ENCODE measurements at regions of chr18 and their contacts with region 1.

Region 1: GRCh38 chr18:56083097-56083521 is 495.1 kb upstream of the TCF4 start:
- DNase-seq: peak; percentile 67
- ATAC-seq: peak; percentile 58

Region 2: GRCh38 chr18:56052202-56052601 is 30.9 kb before region 1 on chr18:
- intact Hi-C with region 1: loop called (anchors 1 kb)
- DNase-seq: no peak
- ATAC-seq: no peak

Region 3: DNA sequence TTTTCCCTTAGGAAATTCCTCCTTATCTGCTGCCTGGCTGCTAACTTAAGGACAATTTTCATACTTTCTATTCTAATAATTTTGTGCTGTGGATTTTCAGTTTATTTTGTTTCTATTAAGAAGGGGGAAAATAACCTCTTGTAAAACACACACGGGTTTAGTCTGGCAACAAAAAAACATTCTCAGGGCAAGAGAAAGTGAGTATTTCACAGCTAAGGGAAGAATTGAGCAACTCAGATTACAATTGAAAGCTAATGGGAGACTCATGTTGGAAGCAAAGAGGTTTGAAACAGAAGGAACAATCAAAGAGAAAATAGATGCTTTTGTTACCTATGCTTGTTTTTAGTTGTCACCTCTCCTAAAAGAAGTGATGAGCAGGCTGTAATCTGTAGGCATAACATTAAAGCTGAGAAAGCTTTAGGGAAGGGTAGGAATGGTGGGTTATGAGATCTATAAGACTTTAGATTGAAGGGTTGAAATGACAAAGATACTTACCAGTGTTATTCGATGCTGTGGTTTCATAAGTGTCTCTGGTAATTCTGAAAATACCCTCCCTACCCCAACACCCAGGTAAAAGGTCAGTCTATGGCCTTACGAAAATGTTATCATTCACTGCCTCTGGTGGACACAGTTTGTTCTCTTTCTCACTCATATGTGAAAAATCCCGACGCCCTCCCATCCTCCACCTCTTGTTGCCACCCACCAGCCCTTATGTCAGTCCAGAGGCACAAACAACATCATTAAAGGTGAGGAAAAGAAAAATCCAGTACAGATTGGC is 44.4 kb after region 1 on chr18:
- intact Hi-C with region 1: no loop called
- DNase-seq: no peak
- ATAC-seq: peak; percentile 81

Measured in sciatic nerve (tissue), 2 donors.